Activated CD8-positive, alpha-beta T cell treated with anti-CD3 and anti-CD28 coated beads, Interleukin-2, amount 10 ng/mL, durations not matched to agents 7 days and 5 days (primary cell): ENCODE measurements at regions of chr4 and their contacts with region 1.

Region 1: DNA sequence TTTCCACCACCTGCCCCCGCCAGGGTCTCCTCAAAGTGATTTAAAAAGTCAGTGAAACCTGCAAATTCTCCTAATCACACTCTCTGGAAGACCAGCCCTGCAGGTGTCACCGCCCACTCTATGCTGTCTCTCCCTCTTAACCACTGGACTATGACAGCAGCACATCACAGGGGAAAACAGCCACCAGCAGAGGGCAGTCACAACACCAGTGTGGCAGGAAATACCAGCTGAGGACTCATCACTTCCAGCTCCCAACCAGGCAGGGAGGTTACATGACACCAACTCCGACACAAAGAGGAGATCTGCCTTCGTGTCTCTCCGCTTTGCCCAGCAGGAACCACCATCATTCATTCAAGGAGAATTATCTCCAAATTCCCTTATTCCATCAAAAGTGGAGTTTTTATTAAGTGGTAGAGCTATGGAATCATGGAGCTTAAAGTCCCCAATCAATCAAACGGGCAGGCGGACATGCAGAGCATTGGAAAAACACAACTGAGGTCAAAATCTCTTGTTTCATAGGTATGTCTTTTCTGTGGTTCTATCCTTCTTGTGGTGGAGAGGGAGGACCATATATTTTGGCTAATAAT is 91.3 kb downstream of the NSUN7 start:
- DNase-seq: peak; percentile 85
- ATAC-seq: peak; percentile 92
- H3K4me3 Mint-ChIP-seq: no peak overlapping the region
- H3K27ac Mint-ChIP-seq: no peak overlapping the region
- H3K4me1 Mint-ChIP-seq: peaks cover 3% of the 10 kb centered on the region
- H3K27me3 Mint-ChIP-seq: peaks cover 8% of the 10 kb centered on the region

Region 2: GRCh38 chr4:40736910-40737309 is 104.2 kb before region 1 on chr4:
- CTCF ChIA-PET with region 1: interaction called, 81 read pairs
- POLR2A ChIA-PET with region 1: interaction called, 3 read pairs
- DNase-seq: no peak
- ATAC-seq: no peak
- H3K4me3 Mint-ChIP-seq: no peak overlapping the region
- H3K27ac Mint-ChIP-seq: no peak overlapping the region
- H3K4me1 Mint-ChIP-seq: peaks cover 25% of the 10 kb centered on the region
- H3K27me3 Mint-ChIP-seq: peaks cover 11% of the 10 kb centered on the region

Region 3: DNA sequence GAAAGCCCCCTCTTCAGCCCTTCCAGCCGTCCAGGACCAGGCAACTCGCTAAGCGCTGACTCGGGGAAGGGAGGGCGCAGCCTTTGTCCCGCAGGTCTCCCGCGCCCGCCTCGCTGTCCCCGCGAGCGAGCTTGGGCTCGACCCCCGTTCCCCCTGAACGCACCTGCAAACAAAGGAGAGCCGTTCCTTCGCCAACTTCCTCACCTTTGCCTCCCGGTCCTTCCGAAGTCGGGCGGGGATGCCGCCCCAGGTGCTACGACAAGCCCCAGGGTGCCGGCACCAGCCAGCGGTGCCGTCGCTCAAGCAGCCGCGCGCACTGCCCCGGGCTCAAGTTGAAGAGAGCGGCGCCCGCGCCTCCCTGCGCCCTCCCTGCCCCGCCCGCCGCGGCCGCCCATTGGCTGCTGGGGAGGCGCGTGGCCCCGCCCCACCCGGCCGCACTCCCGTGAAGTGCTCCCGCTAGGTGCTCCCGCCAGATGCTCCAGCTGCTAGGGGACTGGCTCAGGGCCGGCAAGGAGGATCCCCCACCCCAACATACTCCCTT is 15.8 kb after region 1 on chr4:
- CTCF ChIA-PET with region 1: interaction called, 16 read pairs
- POLR2A ChIA-PET with region 1: no interaction called
- DNase-seq: peak; percentile 68
- ATAC-seq: peak; percentile 99
- H3K4me3 Mint-ChIP-seq: peak overlapping the region; percentile 71
- H3K27ac Mint-ChIP-seq: no peak overlapping the region
- H3K4me1 Mint-ChIP-seq: peaks cover 14% of the 10 kb centered on the region
- H3K27me3 Mint-ChIP-seq: peaks cover 51% of the 10 kb centered on the region

Region 4: GRCh38 chr4:40887288-40888131 is 46.4 kb after region 1 on chr4:
- CTCF ChIA-PET with region 1: interaction called, 13 read pairs
- POLR2A ChIA-PET with region 1: no interaction called
- DNase-seq: no peak
- ATAC-seq: no peak
- H3K4me3 Mint-ChIP-seq: no peak overlapping the region
- H3K27ac Mint-ChIP-seq: no peak overlapping the region
- H3K4me1 Mint-ChIP-seq: peaks cover 19% of the 10 kb centered on the region
- H3K27me3 Mint-ChIP-seq: peaks cover 16% of the 10 kb centered on the region

Region 5: GRCh38 chr4:40924096-40924792 is 83.2 kb after region 1 on chr4:
- CTCF ChIA-PET with region 1: interaction called, 18 read pairs
- POLR2A ChIA-PET with region 1: no interaction called
- DNase-seq: peak; percentile 81
- ATAC-seq: peak; percentile 86
- H3K4me3 Mint-ChIP-seq: no peak overlapping the region
- H3K27ac Mint-ChIP-seq: peak overlapping the region; percentile 70
- H3K4me1 Mint-ChIP-seq: peaks cover 5% of the 10 kb centered on the region
- H3K27me3 Mint-ChIP-seq: peaks cover 7% of the 10 kb centered on the region